Vagina (tissue), 2 donors: ENCODE measurements at regions of chr14 and their contacts with region 1.

Region 1: DNA sequence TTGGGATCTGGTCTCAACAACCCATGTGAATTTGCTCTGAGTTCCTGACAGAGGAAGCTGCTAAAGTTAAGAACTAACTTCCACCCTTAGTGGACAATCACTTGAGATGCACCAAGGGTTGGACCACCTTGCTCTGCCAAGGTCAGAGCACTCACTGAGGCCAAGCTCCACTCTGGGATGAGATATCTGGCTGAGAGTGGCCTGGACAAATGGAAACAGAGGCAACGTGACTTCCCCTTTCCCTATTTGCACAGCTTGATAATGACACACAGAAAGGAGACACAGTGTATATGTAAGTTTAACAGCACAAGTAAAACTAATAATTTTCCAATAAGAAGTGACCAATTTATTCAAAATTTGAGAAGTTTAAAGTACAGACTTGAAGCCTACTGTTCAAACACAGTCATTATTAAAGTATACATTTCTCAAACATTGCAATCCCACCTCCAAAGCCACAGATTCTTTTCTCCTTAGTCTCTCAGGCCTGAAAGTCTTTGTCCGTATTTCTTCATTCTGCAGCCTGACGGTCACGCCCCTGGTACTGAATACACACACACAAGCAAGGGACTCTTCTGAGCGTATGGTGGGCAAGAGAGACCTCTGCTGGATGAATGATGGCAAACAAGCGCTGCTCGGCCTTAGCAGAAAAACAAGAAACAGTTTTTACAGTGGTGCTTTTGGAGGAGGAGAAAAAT is 28.6 kb downstream of the TMEM30B start:
- DNase-seq: no peak
- H3K4me3 ChIP-seq: no peak overlapping the region
- H3K27ac ChIP-seq: no peak overlapping the region
- H3K4me1 ChIP-seq: peaks cover 3% of the 10 kb centered on the region
- H3K27me3 ChIP-seq: no peaks in the 10 kb centered on the region
- CTCF ChIP-seq: peak; percentile 40 to 92 (median 90)
- POLR2A ChIP-seq: no peak

Region 2: DNA sequence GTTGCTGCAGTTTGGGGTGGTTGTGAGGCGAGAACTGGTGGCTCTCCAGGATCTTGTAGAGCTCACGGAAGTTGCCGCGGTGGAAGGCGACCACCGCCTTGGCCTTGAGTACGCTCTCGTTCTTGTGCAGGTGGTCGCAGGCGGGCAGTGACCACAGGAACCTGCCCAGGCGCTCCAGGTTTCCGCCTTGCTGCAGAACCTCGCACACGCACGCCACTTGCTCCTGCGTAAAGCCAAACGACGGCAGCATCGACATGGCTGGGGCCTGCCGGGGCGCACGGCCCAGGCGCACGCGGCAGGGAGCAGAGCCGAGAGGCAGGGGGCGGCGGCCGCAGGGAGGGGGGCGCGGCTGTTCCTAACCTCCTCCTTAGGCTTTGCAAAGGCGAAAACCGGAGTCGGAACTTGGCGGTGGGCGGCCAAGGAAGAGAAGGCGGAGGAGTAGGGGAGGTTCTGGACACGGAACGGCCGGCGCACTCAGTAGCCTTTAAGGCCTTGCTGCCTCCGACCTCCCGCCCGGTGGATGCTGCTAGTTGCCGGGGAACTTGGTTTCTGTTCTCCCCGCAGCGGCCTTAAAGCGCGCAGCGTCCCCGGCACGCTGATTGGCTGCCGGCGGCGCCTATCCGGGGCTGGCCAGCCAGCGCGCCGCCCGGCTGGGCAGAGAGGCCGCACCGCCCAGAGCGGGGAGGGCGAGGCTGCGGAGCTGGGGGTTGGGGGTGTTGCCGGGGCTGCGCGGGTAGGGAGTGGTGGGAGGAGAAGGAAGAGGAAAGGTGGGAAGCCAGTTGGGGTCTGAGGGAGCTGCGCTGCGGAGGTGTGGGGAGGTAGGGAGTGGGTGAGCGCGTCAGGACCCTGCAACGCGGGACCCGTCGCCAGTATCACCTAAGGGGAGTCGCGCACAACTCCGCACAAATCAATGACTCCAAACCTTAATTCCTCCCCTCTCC is 603.3 kb before region 1 on chr14 and contains the start of gene SIX1:
- intact Hi-C with region 1: loop called (anchors 10 kb)
- DNase-seq: no peak
- H3K4me3 ChIP-seq: peak within 1 kb of the TSS; percentile 46 to 55
- H3K27ac ChIP-seq: no peak within 1 kb of the TSS
- H3K4me1 ChIP-seq: peaks cover 52% of the 10 kb centered on the region
- H3K27me3 ChIP-seq: peaks cover 33% of the 10 kb centered on the region
- CTCF ChIP-seq: no peak
- POLR2A ChIP-seq: no peak
- total RNA-seq, gene SIX1: 3.7 TPM

Region 3: DNA sequence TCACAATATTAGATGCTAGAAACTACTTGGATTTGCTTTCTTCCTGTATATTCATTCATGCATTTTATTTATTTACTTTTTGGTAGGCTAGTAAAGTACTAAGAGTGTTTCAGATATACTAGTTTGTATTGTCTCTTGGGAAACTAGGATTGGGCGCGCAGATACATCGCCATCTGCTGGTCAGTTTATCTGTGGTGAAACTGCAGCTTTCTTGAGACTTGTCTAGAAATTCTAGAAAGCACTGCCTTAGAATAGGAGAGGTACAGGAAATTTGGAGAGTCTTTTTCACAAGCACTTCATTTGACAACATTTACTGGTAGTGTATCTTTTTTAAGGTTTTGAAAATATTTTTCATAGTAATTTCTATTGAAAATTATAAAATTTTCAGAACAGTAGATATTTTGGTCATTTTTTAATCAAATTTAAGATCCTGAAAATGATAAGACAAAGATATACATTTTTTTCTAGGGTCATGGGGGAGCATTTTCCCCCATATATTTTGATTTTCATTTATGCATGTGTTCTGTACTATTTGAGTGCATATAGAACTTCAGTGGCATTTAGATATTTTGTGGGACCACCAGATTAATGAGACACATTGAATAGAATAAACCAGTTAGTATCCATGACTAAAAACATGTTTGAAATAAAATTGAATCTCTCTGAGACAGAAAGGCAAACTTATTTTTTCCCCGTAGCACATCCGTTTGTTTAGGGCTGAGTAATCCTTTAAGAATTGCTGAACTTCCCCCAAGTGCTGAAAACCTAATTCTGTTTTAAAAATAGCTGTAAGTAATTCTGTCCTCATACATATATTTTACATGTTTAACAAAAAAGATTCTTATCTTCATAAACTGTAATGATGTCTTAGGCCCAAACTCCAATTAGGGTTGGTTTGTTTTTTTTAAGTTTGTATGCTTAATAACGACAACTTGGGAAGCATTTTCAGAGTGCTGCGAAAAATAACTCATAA is 227.0 kb before region 1 on chr14:
- intact Hi-C with region 1: loop called (anchors 10 kb)
- DNase-seq: no peak
- H3K4me3 ChIP-seq: no peak overlapping the region
- H3K27ac ChIP-seq: no peak overlapping the region
- H3K4me1 ChIP-seq: no peaks in the 10 kb centered on the region
- H3K27me3 ChIP-seq: no peaks in the 10 kb centered on the region
- CTCF ChIP-seq: peak; percentile 53 to 74 (median 66)
- POLR2A ChIP-seq: no peak